Breast epithelium (tissue), 4 donors: ENCODE measurements at regions of chr21 and their contacts with region 1.

Region 1: DNA sequence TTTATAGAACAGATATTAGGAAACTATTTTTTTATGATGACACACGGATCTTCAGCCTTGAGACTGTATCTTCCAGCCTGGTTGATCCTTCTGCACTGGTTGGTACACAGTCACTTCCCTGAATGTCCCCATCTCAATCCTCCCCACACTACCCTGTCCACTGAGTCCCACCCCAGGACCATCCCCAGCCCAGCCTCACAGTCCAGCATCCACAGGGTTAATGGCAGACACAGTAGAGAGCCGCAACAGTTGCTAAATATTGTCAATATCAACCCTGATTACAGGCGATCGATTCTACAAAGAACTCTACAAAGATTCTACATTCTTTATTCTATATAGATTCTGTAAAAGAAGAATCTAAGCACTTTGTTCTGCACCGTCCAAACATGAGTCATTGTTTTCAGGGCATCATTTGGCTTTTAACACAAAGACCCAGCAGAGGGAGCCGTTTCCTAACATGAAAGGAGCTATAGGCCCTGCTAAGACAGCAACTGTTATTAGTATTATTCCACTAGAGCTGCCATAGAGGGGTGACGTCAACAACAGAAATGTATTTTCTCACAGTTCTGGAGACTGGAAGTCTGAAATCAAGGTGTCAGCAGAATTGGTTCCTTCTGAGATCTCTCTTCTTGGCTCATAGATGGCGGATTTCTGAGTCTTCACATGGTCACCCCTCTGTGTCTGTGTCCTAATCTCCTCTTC is 30.1 kb upstream of the IFNAR2 start:
- DNase-seq: peak in 1 of 2 donors; percentile 80
- H3K4me3 ChIP-seq: no peak overlapping the region
- H3K27ac ChIP-seq: peak overlapping the region; percentile 22 to 79
- H3K4me1 ChIP-seq: no peaks in the 10 kb centered on the region
- H3K27me3 ChIP-seq: no peaks in the 10 kb centered on the region
- CTCF ChIP-seq: peak; percentile 37 to 76 (median 75)
- POLR2A ChIP-seq: no peak

Region 2: DNA sequence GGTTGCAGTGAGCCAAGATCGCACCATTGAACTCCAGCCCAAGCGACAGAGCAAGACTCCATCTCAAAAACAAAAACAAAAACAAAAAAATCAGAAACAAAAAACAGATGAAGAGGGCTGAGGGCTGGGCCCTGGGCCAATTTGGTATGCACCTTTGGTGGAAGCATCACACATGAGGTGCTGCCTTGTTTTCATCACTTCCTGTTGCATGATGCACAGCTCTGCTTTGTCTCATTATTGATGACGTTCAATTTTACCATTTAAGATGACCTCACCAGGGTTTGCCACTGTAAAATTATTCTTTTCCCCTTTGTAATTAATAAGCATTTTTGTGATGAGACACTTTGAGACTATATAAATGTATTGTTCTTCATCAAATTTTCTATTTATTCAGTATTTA is 20.3 kb after region 1 on chr21:
- intact Hi-C with region 1: loop called (anchors 2 kb)
- DNase-seq: no peak
- H3K4me3 ChIP-seq: no peak overlapping the region
- H3K27ac ChIP-seq: no peak overlapping the region
- H3K4me1 ChIP-seq: no peaks in the 10 kb centered on the region
- H3K27me3 ChIP-seq: no peaks in the 10 kb centered on the region
- CTCF ChIP-seq: no peak
- POLR2A ChIP-seq: no peak